ENCODE measurements at regions of chr16 and their contacts with region 1.

Region 1: GRCh38 chr16:17416461-17417311 is 54.1 kb downstream of the XYLT1 start:
- DNase-seq: peak; percentile 85
- H3K4me3 Mint-ChIP-seq: peak overlapping the region; percentile 83
- H3K27ac Mint-ChIP-seq: peak overlapping the region; percentile 90
- H3K4me1 Mint-ChIP-seq: peaks cover 52% of the 10 kb centered on the region
- H3K27me3 Mint-ChIP-seq: no peaks in the 10 kb centered on the region

Region 2: DNA sequence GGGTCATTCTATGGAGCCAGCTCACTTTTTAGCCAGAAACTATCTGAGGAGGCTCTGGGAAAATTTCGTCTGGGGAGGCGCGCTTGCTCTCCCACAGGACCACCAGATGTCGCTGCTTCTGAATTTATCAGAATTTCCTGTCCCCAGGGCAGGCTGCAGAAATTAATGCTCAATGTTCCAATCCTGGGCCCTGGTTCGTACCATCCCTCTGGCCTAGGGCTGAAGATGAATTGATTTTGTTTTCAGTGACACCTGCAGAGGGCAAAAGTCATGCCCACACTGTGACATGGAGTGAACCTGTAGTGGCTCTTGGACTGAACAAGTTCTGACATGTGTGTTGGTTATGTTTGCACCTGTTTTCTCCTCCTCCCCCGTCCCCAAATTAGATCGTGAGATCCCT is 555.1 kb before region 1 on chr16:
- intact Hi-C with region 1: loop called (anchors 5 kb)
- DNase-seq: peak; percentile 85
- H3K4me3 Mint-ChIP-seq: no peak overlapping the region
- H3K27ac Mint-ChIP-seq: no peak overlapping the region
- H3K4me1 Mint-ChIP-seq: peaks cover 2% of the 10 kb centered on the region
- H3K27me3 Mint-ChIP-seq: peaks cover 3% of the 10 kb centered on the region

Region 3: GRCh38 chr16:17273142-17273561 is 143.5 kb before region 1 on chr16:
- intact Hi-C with region 1: loop called (anchors 1 kb)
- DNase-seq: peak; percentile 74
- H3K4me3 Mint-ChIP-seq: peak overlapping the region; percentile 68
- H3K27ac Mint-ChIP-seq: peak overlapping the region; percentile 71
- H3K4me1 Mint-ChIP-seq: peaks cover 44% of the 10 kb centered on the region
- H3K27me3 Mint-ChIP-seq: peaks cover 5% of the 10 kb centered on the region

Region 4: GRCh38 chr16:17369421-17370222 is 47.1 kb before region 1 on chr16:
- intact Hi-C with region 1: loop called (anchors 1 kb)
- DNase-seq: peak; percentile 93
- H3K4me3 Mint-ChIP-seq: peak overlapping the region; percentile 86
- H3K27ac Mint-ChIP-seq: peak overlapping the region; percentile 96
- H3K4me1 Mint-ChIP-seq: peaks cover 84% of the 10 kb centered on the region
- H3K27me3 Mint-ChIP-seq: no peaks in the 10 kb centered on the region

Region 5: GRCh38 chr16:17439580-17439979 is 22.9 kb after region 1 on chr16:
- intact Hi-C with region 1: loop called (anchors 1 kb)
- DNase-seq: peak; percentile 58
- H3K4me3 Mint-ChIP-seq: peak overlapping the region; percentile 55
- H3K27ac Mint-ChIP-seq: peak overlapping the region; percentile 66
- H3K4me1 Mint-ChIP-seq: peaks cover 39% of the 10 kb centered on the region
- H3K27me3 Mint-ChIP-seq: no peaks in the 10 kb centered on the region

Region 6: GRCh38 chr16:17467923-17468540 is 51.3 kb after region 1 on chr16:
- intact Hi-C with region 1: loop called (anchors 1 kb)
- DNase-seq: peak; percentile 84
- H3K4me3 Mint-ChIP-seq: peak overlapping the region; percentile 89
- H3K27ac Mint-ChIP-seq: no peak overlapping the region
- H3K4me1 Mint-ChIP-seq: peaks cover 53% of the 10 kb centered on the region
- H3K27me3 Mint-ChIP-seq: no peaks in the 10 kb centered on the region